Dorsolateral prefrontal cortex (tissue), 120 donors: ENCODE measurements at regions of chrX and their contacts with region 1.

Region 1: DNA sequence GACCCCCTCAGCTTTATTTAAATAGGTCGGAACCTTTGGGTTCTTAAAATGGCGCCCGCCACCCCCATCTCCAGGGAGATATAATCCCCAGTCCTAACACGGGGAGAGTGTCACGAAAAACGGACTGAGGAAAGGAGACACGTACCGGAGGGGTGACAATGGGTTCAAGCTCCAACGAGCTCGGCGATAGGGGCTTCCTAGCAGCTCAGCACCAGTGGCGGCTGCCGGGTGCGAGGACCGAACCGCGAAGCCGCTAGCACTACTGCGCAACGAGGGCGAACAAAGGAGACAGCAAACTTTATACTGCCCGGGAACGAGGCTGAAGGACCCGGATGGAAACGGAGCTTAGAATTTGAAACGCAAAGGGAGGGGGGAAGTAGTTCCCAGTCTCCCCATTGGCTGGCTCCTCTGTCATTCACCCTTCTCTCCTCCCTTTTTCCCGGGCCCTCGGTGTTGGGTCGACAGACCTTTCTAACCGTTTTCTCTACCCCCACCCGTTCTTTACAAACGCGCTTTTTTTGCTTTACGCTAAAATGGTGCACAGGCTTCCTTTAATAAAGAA is at the start of gene RBMX:
- DNase-seq: peak; percentile 81 to 96 (median 90)
- H3K4me3 ChIP-seq: peak within 1 kb of the TSS; percentile 31 to 85 (median 72)
- H3K27ac ChIP-seq: peak within 1 kb of the TSS in 58 of 59 donors; percentile 66 to 96 (median 89)
- H3K27me3 ChIP-seq: peaks cover 0 to 20% (median 0%) of the 10 kb centered on the region in 45 donors
- CTCF ChIP-seq: no peak
- total RNA-seq, gene RBMX: 79.1 to 161 (median 117) TPM

Region 2: GRCh38 chrX:136376713-136377112 is 503.8 kb before region 1 on chrX:
- intact Hi-C with region 1: no loop called
- DNase-seq: no peak
- H3K4me3 ChIP-seq: no peak overlapping the region
- H3K27ac ChIP-seq: no peak overlapping the region
- H3K27me3 ChIP-seq: peaks cover 0 to 36% (median 0%) of the 10 kb centered on the region in 45 donors
- CTCF ChIP-seq: no peak

Region 3: DNA sequence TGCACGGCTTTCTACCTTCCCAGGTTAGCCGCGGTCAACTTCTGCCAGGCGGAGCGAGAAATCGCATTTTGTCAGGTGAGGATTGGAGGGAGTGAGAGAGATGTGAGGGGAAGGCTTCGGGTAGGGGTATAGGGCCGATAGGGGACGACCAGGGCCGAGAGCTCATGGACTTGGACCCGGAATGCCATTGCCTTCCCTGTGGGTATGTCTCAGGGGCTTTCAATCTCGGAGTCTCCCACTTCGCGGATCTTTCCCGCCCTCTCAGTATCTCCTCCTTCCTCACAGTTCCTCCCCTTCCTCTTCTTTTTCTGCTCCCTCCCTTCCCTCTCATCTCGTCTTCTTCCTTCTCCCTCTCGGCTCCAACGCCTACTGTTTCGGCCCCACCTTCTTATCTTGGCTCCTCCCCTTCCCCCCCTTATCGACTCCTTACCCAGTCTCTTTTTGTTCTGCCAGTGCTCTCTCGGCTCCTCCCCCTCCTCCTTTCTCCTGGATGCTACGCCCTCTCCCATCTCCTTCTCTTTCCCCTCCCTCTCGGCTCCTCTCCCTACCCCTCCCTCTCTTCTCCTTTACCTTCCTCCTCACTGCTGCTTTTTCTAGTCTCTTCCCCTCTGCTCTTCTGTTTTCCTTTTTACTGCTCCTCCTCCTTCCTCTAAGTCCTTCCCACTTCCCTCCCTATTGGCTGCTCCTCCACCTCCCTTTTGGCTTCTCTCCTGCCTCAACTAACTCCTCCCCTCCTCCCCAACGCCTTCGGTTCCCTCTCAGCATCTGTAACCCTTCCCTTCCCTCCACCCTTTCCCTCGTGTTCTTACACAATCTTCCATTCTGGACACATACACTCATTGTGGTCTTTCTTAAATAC is 29.4 kb after region 1 on chrX:
- intact Hi-C with region 1: loop called (anchors 1 to 2 kb)
- DNase-seq: peak in 9 of 10 donors; percentile 43 to 64 (median 56)
- H3K4me3 ChIP-seq: peak overlapping the region; percentile 41 to 77 (median 65)
- H3K27ac ChIP-seq: peak overlapping the region in 47 of 59 donors; percentile 17 to 88 (median 64)
- H3K27me3 ChIP-seq: peaks cover 0 to 38% (median 3%) of the 10 kb centered on the region in 45 donors
- CTCF ChIP-seq: no peak